Right cardiac atrium (tissue), 5 donors: ENCODE measurements at regions of chr2 and their contacts with region 1.

Region 1: GRCh38 chr2:85011747-85012146 is 40.8 kb downstream of the KCMF1 start:
- DNase-seq: no peak
- ATAC-seq: no peak
- H3K4me3 ChIP-seq: no peak overlapping the region
- H3K27ac ChIP-seq: no peak overlapping the region
- H3K4me1 ChIP-seq: peaks cover 7% of the 10 kb centered on the region
- H3K27me3 ChIP-seq: no peaks in the 10 kb centered on the region

Region 2: GRCh38 chr2:84781942-84782716 is 229.6 kb before region 1 on chr2:
- intact Hi-C with region 1: no loop called
- DNase-seq: peak in 2 of 3 donors; percentile 15 to 33
- ATAC-seq: peak in 1 of 2 donors; percentile 35
- H3K4me3 ChIP-seq: no peak overlapping the region
- H3K27ac ChIP-seq: no peak overlapping the region
- H3K4me1 ChIP-seq: no peaks in the 10 kb centered on the region
- H3K27me3 ChIP-seq: no peaks in the 10 kb centered on the region

Region 3: DNA sequence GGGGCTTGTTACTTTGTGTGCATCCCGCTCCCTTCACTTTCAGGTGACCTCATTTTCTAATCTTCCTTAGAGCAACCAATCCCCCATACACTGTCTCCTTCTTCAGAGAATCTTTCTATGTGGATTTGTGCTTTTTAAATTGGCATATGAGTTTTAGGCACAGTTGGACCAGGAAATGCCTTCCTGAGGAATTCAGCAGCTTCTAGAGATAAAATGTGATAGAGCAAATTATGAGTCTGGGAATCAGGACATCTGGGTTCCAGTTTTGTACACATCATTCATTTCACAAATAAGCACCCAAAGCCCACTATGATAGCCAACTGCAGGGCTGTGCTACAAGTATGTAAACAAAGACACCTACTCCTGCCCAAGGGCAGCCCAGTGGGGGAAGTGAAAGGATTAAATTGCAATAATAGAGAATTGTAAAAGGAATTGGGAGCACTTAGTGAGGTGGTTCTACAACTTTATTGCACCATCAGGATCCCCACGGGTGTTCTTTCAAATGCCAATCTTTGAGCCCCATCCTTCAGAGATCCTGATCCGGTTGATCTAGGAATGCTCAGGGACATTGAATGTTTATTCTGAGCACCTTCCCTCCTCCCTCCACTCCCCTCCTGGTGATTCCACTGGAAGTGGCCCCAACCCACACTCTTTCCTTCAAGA is 52.1 kb before region 1 on chr2:
- intact Hi-C with region 1: no loop called
- DNase-seq: no peak
- ATAC-seq: no peak
- H3K4me3 ChIP-seq: no peak overlapping the region
- H3K27ac ChIP-seq: no peak overlapping the region
- H3K4me1 ChIP-seq: peaks cover 3% of the 10 kb centered on the region
- H3K27me3 ChIP-seq: no peaks in the 10 kb centered on the region

Region 4: GRCh38 chr2:84970868-84971509 is 40.8 kb before region 1 on chr2 and contains the start of gene KCMF1:
- intact Hi-C with region 1: loop called in 1 of 4 experiments (anchors 5 kb)
- DNase-seq: peak; percentile 85 to 93 (median 89)
- ATAC-seq: peak; percentile 81
- H3K4me3 ChIP-seq: peak within 1 kb of the TSS; percentile 100
- H3K27ac ChIP-seq: peak within 1 kb of the TSS; percentile 99
- H3K4me1 ChIP-seq: peaks cover 5% of the 10 kb centered on the region
- H3K27me3 ChIP-seq: no peaks in the 10 kb centered on the region
- total RNA-seq, gene KCMF1: 71.5 to 97.1 (median 88.5) TPM

Region 5: GRCh38 chr2:85199698-85200097 is 188.0 kb after region 1 on chr2:
- intact Hi-C with region 1: no loop called
- DNase-seq: no peak
- ATAC-seq: peak; percentile 74 to 88
- H3K4me3 ChIP-seq: no peak overlapping the region
- H3K27ac ChIP-seq: no peak overlapping the region
- H3K4me1 ChIP-seq: peaks cover 3% of the 10 kb centered on the region
- H3K27me3 ChIP-seq: no peaks in the 10 kb centered on the region